Activated naive CD4-positive, alpha-beta T cell treated with anti-CD3 and anti-CD28 coated beads for 36 hours (primary cell): ENCODE measurements at regions of chr15 and their contacts with region 1.

Region 1: GRCh38 chr15:25368850-25369249 is 70.0 kb downstream of the UBE3A start:
- DNase-seq: no peak
- H3K4me3 Mint-ChIP-seq: no peak overlapping the region
- H3K27ac Mint-ChIP-seq: no peak overlapping the region
- H3K4me1 Mint-ChIP-seq: peaks cover 16% of the 10 kb centered on the region
- H3K27me3 Mint-ChIP-seq: no peaks in the 10 kb centered on the region

Region 2: DNA sequence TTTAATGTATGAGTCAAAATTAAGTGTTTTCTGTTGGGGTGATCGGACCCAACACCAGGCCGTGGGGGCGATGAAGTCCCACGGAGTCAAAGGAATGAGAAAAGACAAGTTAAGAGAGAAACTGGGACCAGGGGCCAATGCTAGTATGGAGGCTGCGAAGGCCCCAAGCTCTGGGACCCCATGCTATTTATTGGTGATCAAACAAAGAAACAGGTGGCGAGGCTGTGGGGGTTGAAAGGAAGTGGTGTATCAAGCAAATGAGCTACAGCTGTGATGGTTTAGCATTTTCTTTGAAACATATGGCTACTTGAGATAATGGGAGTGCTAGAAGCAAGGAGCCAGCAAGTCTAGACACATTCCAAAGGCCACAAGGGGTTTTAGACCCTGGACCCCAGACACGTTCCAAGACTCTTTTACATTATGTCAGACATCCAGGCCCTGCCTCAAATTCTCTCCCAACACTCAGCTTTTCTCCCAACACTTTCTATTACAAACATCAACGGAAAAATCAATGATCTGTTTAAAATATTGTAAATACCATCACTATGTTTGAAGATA is 470.1 kb before region 1 on chr15:
- CTCF ChIA-PET with region 1: no interaction called
- intact Hi-C with region 1: no loop called
- DNase-seq: no peak
- H3K4me3 Mint-ChIP-seq: no peak overlapping the region
- H3K27ac Mint-ChIP-seq: no peak overlapping the region
- H3K4me1 Mint-ChIP-seq: no peaks in the 10 kb centered on the region
- H3K27me3 Mint-ChIP-seq: peaks cover 2% of the 10 kb centered on the region

Region 3: DNA sequence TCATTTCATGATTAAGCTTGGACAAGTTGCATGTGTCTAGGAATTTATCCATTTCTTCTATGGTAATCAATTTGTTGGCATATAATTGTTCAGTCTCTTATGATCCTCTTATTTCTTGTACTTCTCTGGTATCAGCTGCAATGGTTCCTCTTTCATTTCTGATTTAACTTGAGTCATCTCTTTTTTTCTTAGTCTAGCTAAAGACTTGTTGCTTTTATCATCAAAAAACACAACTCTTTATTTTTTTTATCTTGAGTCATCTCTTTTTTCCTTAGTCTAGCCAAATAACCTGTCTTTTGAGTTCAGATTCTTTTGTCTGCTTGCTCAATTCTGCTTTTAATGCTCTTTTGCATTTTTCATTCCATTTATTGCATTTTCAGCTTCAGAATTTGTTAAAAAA is 32.7 kb after region 1 on chr15:
- CTCF ChIA-PET with region 1: no interaction called
- intact Hi-C with region 1: loop called (anchors 5 kb)
- DNase-seq: no peak
- H3K4me3 Mint-ChIP-seq: no peak overlapping the region
- H3K27ac Mint-ChIP-seq: no peak overlapping the region
- H3K4me1 Mint-ChIP-seq: peaks cover 42% of the 10 kb centered on the region
- H3K27me3 Mint-ChIP-seq: no peaks in the 10 kb centered on the region